HepG2 (cell line): ENCODE measurements at regions of chr22 and their contacts with region 1.

Region 1: DNA sequence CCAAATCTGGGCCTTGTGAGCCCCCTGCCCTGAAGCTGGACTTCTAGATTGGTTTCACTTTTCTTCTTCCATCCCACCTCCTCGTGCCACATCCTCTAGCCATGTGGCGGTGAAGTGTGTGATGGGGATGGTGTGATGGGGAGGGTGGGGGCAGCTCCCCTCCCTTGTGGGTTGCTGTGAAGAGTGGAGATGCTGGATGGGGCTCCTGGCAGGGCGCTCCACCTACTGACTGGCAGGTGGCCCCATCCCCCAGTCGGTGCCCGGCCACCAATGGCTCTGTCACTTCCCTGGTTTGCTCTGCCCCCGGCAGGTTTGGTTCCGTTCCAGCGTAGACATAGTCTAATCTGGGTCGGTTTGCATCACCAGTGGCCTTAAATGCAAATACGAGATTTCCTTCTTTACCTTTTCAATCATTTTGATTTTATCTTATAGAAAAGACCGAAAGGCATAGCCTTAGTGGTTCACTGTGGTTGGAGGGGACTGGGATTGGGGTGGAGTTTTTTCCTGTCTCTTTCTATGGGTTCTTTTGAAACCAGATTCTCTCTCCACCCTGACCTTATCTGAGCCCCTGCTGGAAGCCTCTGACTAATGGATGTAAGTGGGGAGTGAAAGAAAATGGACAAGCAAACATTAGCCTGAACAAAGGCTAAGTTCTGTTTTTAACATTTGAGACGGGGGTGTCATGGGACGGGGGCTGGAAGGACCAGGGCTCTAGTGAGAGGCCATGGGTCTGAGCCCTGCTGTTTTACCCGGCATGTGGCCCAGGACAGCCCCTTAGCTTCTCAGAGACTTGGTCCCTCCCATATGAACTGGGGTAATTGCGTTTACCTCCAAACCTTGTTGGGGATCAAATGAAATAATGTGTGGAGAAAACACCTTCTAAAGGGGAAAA is 149.3 kb downstream of the CACNA1I start:
- DNase-seq: no peak
- ATAC-seq: no peak
- H3K4me3 ChIP-seq: no peak overlapping the region
- H3K27ac ChIP-seq: no peak overlapping the region
- H3K4me1 ChIP-seq: peaks cover 8% of the 10 kb centered on the region; the same call in 1 of the 2 replicates
- H3K27me3 ChIP-seq: peaks cover 0 to 32% of the 10 kb centered on the region in 2 experiments; a peak in 3 of 5 replicates
- CTCF ChIP-seq: no peak
- EP300 ChIP-seq: no peak
- POLR2A ChIP-seq: no peak
- RAD21 ChIP-seq: no peak

Region 2: GRCh38 chr22:39773976-39774539 is 54.3 kb after region 1 on chr22:
- CTCF ChIA-PET with region 1: no interaction called
- POLR2A ChIA-PET with region 1: no interaction called
- in situ Hi-C with region 1: loop called (anchors 10 kb)
- intact Hi-C with region 1: no loop called
- DNase-seq: no peak
- ATAC-seq: no peak
- H3K4me3 ChIP-seq: no peak overlapping the region
- H3K27ac ChIP-seq: no peak overlapping the region
- H3K4me1 ChIP-seq: no peaks in the 10 kb centered on the region
- H3K27me3 ChIP-seq: no peaks in the 10 kb centered on the region
- CTCF ChIP-seq: no peak
- EP300 ChIP-seq: no peak
- POLR2A ChIP-seq: no peak
- RAD21 ChIP-seq: no peak